Aorta (tissue), 5 donors: ENCODE measurements at regions of chr1 and their contacts with region 1.

Region 1: GRCh38 chr1:86833461-86834215 is 80.3 kb downstream of the SELENOF start:
- DNase-seq: peak; percentile 80 to 81
- ATAC-seq: peak; percentile 86
- H3K4me3 ChIP-seq: no peak overlapping the region
- H3K27ac ChIP-seq: no peak overlapping the region
- H3K4me1 ChIP-seq: no peaks in the 10 kb centered on the region
- H3K27me3 ChIP-seq: no peaks in the 10 kb centered on the region

Region 2: DNA sequence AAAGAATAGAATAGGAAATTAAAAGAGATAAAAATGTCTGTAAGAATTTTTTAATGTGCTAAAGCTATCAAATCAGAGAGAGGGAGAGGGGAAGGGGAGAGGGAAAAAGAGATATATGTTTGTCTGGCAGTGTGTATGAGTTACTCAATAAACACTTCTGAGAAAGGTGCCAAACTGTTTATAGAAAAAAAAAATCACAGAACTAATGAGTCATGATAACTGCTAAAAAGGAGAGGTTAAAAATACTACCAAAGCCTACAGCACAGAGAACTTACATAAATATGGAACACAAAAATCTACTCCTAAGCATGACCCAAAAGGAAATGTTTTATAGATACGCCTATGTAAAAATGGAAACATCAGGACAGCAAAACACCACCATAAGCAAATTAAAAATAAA is 34.8 kb after region 1 on chr1:
- intact Hi-C with region 1: no loop called
- DNase-seq: no peak
- ATAC-seq: no peak
- H3K4me3 ChIP-seq: no peak overlapping the region
- H3K27ac ChIP-seq: no peak overlapping the region
- H3K4me1 ChIP-seq: no peaks in the 10 kb centered on the region
- H3K27me3 ChIP-seq: no peaks in the 10 kb centered on the region

Region 3: GRCh38 chr1:86933562-86934377 is 100.1 kb after region 1 on chr1:
- intact Hi-C with region 1: no loop called
- DNase-seq: no peak
- ATAC-seq: no peak
- H3K4me3 ChIP-seq: no peak overlapping the region
- H3K27ac ChIP-seq: no peak overlapping the region
- H3K4me1 ChIP-seq: no peaks in the 10 kb centered on the region
- H3K27me3 ChIP-seq: no peaks in the 10 kb centered on the region

Region 4: DNA sequence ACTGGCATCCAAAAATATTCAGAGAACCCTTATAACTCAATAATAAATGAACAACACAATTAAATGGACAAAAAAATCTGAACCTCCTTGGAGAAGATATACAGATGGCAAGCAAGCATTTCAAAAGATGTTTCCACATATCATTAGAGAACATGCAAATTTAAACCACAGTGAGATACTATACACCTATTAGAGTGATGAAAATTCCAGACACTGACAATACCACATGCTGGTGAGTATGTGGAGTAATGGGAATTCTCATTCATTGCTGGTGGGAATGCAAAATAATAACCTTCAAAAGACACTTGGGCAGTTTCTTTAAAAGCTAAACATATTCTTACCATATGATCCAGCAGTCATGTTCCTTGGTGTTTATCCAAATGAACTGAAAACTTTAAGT is 126.9 kb after region 1 on chr1:
- intact Hi-C with region 1: loop called in 1 of 2 experiments (anchors 5 kb)
- DNase-seq: no peak
- ATAC-seq: no peak
- H3K4me3 ChIP-seq: no peak overlapping the region
- H3K27ac ChIP-seq: no peak overlapping the region
- H3K4me1 ChIP-seq: no peaks in the 10 kb centered on the region
- H3K27me3 ChIP-seq: no peaks in the 10 kb centered on the region

Region 5: DNA sequence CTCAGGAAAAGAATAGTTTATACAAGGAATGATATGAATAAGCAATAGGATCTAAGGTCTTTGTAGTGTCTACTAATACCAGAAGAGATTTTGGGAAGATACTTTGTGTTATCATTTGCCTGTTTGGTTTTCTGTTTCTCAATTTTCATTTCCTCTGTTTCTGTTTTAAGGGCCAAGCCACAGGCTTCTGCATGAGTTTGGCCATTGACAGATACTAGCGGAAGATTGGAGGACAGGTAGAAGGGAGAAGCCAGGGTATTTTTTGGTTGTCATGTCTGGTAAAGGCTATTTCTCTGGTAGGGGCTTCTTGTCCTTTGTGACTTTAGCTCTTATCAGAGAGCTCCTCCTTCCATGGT is 132.2 kb after region 1 on chr1:
- intact Hi-C with region 1: loop called (anchors 2 to 5 kb)
- DNase-seq: no peak
- ATAC-seq: no peak
- H3K4me3 ChIP-seq: no peak overlapping the region
- H3K27ac ChIP-seq: no peak overlapping the region
- H3K4me1 ChIP-seq: no peaks in the 10 kb centered on the region
- H3K27me3 ChIP-seq: no peaks in the 10 kb centered on the region

Region 6: GRCh38 chr1:87084244-87084836 is 250.7 kb after region 1 on chr1:
- intact Hi-C with region 1: loop called (anchors 2 to 5 kb)
- DNase-seq: no peak
- ATAC-seq: peak; percentile 59
- H3K4me3 ChIP-seq: no peak overlapping the region
- H3K27ac ChIP-seq: no peak overlapping the region
- H3K4me1 ChIP-seq: no peaks in the 10 kb centered on the region
- H3K27me3 ChIP-seq: no peaks in the 10 kb centered on the region